Panc1 (cell line): ENCODE measurements at regions of chr12 and their contacts with region 1.

Region 1: GRCh38 chr12:103877934-103878510 is 37.0 kb upstream of the NT5DC3 start:
- DNase-seq: no peak
- ATAC-seq: peak; percentile 95
- H3K4me3 ChIP-seq: no peak overlapping the region
- H3K27ac ChIP-seq: no peak overlapping the region
- H3K4me1 ChIP-seq: 0 out of 2 replicates have a peak, but pooled peaks cover 4% of the 10 kb centered on the region
- H3K27me3 ChIP-seq: no peaks in the 10 kb centered on the region; the same call in 1 of the 2 replicates
- CTCF ChIP-seq: peak; percentile 89

Region 2: DNA sequence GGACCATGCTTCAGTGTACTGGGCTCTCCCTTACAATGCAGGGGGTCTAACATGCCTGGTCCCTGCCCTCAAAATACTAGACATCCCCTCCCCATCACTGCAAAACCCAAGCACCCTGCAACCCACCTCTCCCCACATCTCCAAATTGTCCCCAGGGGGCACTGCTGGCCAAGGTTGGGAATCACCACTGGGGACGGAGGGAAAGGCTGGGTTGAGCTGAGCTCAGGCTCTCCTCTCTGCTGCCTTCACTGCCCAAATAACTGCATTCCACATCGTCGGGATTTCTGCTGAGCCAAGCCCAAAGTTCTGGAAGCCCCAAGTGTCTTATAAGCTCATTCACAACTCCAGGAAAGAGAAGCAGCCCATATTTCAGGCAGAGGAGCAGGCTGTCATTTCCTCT is 106.6 kb before region 1 on chr12:
- CTCF ChIA-PET with region 1: no interaction called
- POLR2A ChIA-PET with region 1: no interaction called
- in situ Hi-C with region 1: no loop called
- intact Hi-C with region 1: loop called (anchors 5 kb)
- DNase-seq: no peak
- ATAC-seq: peak; percentile 77
- H3K4me3 ChIP-seq: no peak overlapping the region
- H3K27ac ChIP-seq: no peak overlapping the region
- H3K4me1 ChIP-seq: no peaks in the 10 kb centered on the region
- H3K27me3 ChIP-seq: no peaks in the 10 kb centered on the region
- CTCF ChIP-seq: peak; percentile 59; the same call in 1 of the 2 replicates

Region 3: GRCh38 chr12:103840876-103841689 is 36.9 kb before region 1 on chr12 and contains the start of gene NT5DC3:
- CTCF ChIA-PET with region 1: no interaction called
- POLR2A ChIA-PET with region 1: no interaction called
- in situ Hi-C with region 1: no loop called
- intact Hi-C with region 1: no loop called
- DNase-seq: no peak
- ATAC-seq: peak; percentile 89
- H3K4me3 ChIP-seq: peak within 1 kb of the TSS; percentile 91 to 98
- H3K27ac ChIP-seq: peak within 1 kb of the TSS; percentile 86
- H3K4me1 ChIP-seq: peaks cover 25% of the 10 kb centered on the region
- H3K27me3 ChIP-seq: no peaks in the 10 kb centered on the region
- CTCF ChIP-seq: peak; percentile 10; the same call in 1 of the 2 replicates
- total RNA-seq, gene NT5DC3: 24.9 TPM